ENCODE measurements at regions of chr17 and their contacts with region 1.

Region 1: GRCh38 chr17:58447039-58447975 is 30.0 kb upstream of the RNF43 start:
- DNase-seq: peak; percentile 92
- H3K4me3 Mint-ChIP-seq: no peak overlapping the region
- H3K27ac Mint-ChIP-seq: no peak overlapping the region
- H3K4me1 Mint-ChIP-seq: no peaks in the 10 kb centered on the region
- H3K27me3 Mint-ChIP-seq: peaks cover 2% of the 10 kb centered on the region

Region 2: GRCh38 chr17:58200017-58200633 is 247.2 kb before region 1 on chr17:
- intact Hi-C with region 1: loop called (anchors 2 kb)
- DNase-seq: peak; percentile 86
- H3K4me3 Mint-ChIP-seq: no peak overlapping the region
- H3K27ac Mint-ChIP-seq: no peak overlapping the region
- H3K4me1 Mint-ChIP-seq: peaks cover 2% of the 10 kb centered on the region
- H3K27me3 Mint-ChIP-seq: peaks cover 6% of the 10 kb centered on the region

Region 3: DNA sequence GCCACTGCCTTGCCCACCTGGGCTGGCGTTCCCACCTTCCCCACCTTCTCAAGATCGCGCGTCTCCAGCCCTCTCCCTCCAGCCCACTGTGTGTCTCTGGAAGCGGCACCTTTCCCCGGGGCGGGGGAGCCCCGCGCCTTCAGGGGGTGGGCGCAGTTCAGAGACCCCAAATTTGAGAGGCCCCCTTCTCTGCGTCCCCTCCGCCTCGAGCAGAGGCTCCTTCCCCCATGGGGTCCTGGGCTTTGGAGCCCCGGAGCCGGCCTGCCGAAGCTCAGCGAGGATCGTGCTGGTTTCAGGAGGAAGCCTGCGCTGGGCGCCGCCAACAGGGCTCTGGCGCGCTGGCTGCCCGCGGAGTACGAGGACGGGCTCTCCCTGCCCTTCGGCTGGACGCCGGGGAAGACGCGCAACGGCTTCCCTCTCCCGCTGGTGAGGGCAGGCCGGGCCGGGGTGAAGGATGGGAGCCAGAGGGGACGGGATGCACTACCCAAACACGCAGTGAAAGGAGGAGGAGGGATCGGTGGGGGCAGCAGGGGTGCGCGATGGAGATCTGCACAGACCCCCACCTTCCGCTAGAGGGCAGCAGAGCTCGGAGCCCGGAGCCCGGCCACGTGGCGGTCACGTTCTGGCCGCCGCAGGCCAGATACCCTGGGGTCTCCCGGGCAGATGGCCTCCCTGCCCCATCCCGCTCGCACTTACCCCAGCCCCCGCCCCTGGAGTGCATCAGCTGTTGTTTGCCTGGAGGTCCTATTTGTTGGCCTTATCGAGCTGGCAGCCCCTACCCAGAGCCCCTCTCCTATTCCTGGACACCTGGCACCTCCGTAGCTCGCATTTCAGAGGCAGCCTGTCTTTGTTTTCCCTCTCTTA is 197.8 kb before region 1 on chr17:
- intact Hi-C with region 1: loop called (anchors 2 kb)
- DNase-seq: peak; percentile 92
- H3K4me3 Mint-ChIP-seq: peak overlapping the region; percentile 84
- H3K27ac Mint-ChIP-seq: peak overlapping the region; percentile 67
- H3K4me1 Mint-ChIP-seq: peaks cover 14% of the 10 kb centered on the region
- H3K27me3 Mint-ChIP-seq: peaks cover 53% of the 10 kb centered on the region

Region 4: DNA sequence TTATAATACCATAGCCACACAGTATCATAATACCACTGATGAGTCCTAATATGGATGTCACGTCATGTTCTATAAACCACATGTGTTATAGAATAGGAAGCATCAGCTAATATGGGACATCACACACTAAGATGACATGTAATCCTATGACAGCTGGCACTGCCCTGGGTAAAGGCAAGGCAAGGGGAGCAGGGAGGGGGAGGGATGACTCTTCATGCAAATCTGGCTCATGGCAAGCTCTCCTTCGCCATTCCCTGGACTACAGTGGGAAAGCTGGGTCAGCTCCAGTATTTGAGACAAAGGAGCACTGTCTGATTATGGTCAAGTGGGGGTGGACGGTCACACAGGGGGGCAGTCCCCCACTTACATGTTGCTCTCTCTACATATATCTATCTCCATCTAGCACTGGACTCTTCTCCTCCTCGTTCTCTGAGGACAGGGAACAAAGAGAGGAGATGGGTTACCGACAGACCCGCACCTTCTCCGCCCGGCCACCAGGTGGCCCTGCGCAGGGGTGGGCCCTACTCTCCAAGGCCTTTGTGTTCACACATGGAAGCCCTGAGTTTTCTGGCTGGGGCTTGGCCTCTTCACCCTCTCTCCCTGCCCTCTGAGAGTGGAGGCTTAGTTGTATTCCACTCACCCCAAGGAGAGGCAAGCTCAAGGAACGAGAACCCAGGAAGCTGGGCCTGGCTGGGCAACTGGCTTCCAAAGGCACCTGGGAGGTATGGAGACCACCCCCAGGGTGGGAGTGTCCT is 143.2 kb before region 1 on chr17:
- intact Hi-C with region 1: loop called (anchors 1 kb)
- DNase-seq: peak; percentile 90
- H3K4me3 Mint-ChIP-seq: no peak overlapping the region
- H3K27ac Mint-ChIP-seq: no peak overlapping the region
- H3K4me1 Mint-ChIP-seq: peaks cover 2% of the 10 kb centered on the region
- H3K27me3 Mint-ChIP-seq: no peaks in the 10 kb centered on the region

Region 5: DNA sequence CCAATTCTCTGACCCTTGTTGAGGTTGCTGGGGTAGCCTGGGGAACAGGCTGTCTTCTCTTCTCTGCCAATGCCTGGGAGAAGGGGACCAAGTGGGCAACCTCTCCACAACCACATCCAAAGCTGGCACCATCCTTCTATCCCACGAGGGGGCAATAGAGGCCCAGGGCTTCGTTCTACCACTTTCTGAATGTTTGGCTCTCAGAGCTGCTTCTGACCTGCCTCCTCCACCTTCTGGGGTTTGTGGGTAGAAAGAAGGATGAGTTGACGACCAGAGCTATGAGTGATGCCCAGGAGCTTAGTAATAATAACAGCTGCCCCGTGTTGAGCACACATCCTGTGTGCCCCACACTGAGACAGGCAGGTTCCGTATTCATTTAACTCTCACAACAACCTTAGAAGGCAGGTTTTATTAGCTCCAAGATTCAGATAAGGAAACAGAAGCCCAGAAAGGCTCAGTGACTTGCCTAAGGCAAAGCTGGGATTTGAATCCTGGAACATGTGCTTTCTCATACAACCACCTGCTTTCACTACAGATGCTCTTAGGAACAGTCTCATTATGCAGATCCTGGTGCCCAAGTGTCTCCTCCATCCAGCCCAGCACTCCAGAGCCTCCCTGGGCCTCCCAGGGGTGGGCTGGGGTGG is 129.8 kb before region 1 on chr17:
- intact Hi-C with region 1: loop called (anchors 1 kb)
- DNase-seq: peak; percentile 90
- H3K4me3 Mint-ChIP-seq: peak overlapping the region; percentile 18
- H3K27ac Mint-ChIP-seq: peak overlapping the region; percentile 85
- H3K4me1 Mint-ChIP-seq: peaks cover 13% of the 10 kb centered on the region
- H3K27me3 Mint-ChIP-seq: no peaks in the 10 kb centered on the region

Region 6: GRCh38 chr17:58476812-58477211 is 29.5 kb after region 1 on chr17:
- intact Hi-C with region 1: no loop called
- DNase-seq: no peak
- H3K4me3 Mint-ChIP-seq: no peak overlapping the region
- H3K27ac Mint-ChIP-seq: no peak overlapping the region
- H3K4me1 Mint-ChIP-seq: peaks cover 2% of the 10 kb centered on the region
- H3K27me3 Mint-ChIP-seq: peaks cover 3% of the 10 kb centered on the region

Region 7: DNA sequence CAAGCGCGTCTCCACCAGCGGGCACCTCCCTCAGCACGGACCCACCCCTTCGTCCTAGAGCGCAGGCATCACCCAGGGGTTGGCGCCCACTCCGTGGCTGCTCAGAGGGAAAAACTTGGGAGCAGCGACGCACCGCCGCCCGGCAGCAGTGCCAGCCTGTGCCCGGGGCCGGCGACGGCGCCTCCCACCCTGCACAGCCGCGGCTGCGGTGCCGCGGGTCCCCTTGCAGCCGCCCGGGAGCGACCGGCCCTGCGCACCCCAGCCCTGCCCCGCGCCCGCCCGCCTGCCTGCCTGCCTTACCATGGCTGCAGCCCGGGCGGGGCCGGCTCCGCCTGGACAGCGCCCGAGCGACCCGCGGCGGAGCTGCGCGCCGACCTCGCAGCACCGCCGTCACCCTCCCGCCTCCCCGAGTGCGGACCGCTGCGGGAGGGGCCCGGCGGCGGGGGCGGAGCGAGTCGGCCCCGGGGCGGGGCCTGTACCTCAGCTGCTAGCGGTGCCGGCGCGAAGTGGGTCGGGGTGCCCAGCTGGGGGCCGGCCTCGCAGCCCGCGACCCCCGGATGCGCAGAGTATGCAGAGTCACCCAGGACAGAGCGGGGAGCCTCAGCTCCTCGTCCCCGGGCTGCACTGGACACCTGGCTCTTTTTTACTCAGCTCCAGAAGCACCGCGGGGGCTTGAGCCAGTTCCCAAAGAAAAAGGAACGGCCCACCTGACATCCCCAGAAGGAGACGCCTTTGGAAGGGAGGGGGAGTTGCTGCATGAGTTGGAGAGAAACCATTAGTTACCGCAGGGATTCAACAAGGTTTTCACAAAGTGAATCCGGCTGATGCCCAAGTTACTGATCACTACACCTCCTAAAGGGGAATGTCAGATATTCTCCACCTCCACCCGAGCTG is 84.6 kb after region 1 on chr17:
- intact Hi-C with region 1: no loop called
- DNase-seq: peak; percentile 94
- H3K4me3 Mint-ChIP-seq: peak overlapping the region; percentile 64
- H3K27ac Mint-ChIP-seq: no peak overlapping the region
- H3K4me1 Mint-ChIP-seq: peaks cover 13% of the 10 kb centered on the region
- H3K27me3 Mint-ChIP-seq: peaks cover 44% of the 10 kb centered on the region